ENCODE measurements at regions of chrX and their contacts with region 1.

Region 1: DNA sequence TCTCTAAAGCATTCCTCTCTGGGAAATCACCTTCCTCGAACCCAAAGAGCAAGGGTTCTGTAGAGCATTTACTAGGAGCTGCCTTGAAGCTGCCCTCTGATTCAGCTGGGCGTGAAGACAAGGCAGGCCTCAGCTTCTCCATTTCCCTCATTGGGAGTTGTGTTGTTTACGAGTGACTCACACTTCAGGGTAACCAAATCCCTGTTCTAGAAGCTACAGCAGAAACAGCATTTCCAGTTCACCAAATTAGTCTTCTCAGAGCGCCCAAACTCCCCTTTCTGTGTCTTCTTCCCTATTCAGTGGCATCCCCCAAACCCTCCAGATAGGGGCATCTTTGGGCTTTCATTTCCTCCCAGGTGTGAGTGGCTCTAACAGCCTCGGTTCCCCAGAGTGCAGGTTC is 863 bp upstream of the XPNPEP2 start:
- DNase-seq: no peak
- H3K4me3 Mint-ChIP-seq: no peak overlapping the region
- H3K27ac Mint-ChIP-seq: peak overlapping the region; percentile 41
- H3K4me1 Mint-ChIP-seq: peaks cover 44% of the 10 kb centered on the region
- H3K27me3 Mint-ChIP-seq: no peaks in the 10 kb centered on the region

Region 2: DNA sequence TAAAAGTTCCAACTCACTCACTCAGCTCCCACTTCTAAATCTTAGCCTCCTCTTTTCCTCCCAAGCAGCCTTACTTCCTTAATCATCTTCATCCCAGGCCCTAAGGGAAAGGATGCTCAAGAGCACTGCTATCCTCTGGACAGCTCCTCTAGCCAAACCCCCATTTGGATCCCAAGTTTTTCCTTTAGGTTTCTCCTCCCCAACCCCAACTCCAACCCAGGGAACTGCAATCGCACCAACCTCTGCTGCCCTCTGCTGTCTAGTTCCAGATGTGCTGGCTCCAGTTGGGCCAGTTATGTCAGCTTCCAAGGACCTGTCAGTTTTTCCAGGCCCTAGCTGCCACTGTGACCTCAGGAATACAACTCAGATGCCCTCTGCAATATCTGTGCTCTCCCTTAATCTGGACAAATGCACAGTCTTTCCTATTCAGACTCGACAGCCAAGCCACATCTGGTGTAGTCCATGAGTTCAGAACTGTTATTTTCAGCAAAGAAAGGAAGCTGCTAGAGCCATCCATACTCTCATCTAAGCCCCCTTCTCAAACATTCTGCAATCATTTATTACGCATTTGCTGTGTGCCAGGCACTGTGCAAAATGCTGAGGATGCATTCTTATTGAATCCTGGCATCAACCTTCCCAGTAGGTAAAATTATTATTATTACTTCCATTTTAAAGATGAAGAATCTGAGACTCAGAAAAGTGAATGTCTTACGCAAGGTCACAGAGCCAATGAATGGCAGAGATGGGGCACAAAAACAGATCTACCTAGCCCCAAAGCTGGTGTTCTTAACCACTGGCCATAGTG is 11.4 kb before region 1 on chrX:
- CTCF ChIA-PET with region 1: interaction called, 25 read pairs
- POLR2A ChIA-PET with region 1: no interaction called
- DNase-seq: peak; percentile 27
- H3K4me3 Mint-ChIP-seq: no peak overlapping the region
- H3K27ac Mint-ChIP-seq: peak overlapping the region; percentile 77
- H3K4me1 Mint-ChIP-seq: peaks cover 50% of the 10 kb centered on the region
- H3K27me3 Mint-ChIP-seq: no peaks in the 10 kb centered on the region

Region 3: DNA sequence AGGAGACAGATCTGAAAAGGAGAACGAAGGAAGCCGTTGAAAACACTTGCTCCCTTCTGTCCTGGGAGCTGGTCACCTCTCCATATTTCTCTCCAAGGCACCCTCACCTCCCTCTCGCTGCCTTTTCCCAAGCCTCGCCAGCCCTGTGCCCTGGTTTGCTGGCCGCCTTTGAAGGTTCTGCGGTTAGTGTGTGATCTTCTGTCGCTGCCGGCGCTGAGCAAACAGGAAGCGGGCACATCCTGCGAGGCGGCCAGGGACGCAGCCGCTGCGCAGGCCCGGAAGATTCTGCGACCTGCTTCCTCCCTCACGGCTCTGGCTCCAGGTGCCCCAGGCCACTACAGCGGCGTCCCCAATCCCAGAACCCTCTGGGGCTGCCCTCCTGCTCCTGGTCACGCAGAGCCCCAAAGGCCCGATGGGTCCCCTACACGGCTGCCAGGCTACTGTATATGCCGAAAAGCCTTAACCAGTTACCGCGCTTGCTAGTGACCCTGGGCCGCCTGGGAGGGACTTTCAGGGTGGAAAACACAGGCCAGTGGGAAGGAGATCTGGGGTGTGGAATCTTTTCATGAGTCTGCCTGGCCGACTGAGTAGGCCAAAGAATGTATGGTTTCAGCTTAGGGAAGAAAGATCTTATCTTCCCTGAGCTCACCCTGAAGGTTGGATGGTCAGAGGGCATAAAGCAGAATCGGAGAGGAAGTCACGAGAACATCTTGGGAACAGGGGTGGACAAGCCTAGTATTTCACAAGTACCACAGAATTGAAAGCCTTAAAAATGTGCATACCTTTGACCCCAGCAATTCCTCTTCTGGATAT is 39.5 kb after region 1 on chrX:
- CTCF ChIA-PET with region 1: no interaction called
- POLR2A ChIA-PET with region 1: no interaction called
- DNase-seq: peak; percentile 76
- H3K4me3 Mint-ChIP-seq: peak overlapping the region; percentile 65
- H3K27ac Mint-ChIP-seq: peak overlapping the region; percentile 92
- H3K4me1 Mint-ChIP-seq: peaks cover 60% of the 10 kb centered on the region
- H3K27me3 Mint-ChIP-seq: no peaks in the 10 kb centered on the region

Measured in activated CD4-positive, alpha-beta T cell treated with anti-CD3 and anti-CD28 coated beads, Interleukin-2, amount 10 ng/mL, durations not matched to agents 7 days and 5 days (primary cell).